Breast epithelium (tissue), 4 donors: ENCODE measurements at regions of chr10 and their contacts with region 1.

Region 1: GRCh38 chr10:122102869-122103525 is 114.0 kb downstream of the TACC2 start:
- DNase-seq: no peak
- H3K4me3 ChIP-seq: no peak overlapping the region
- H3K27ac ChIP-seq: peak overlapping the region; percentile 43 to 67
- H3K4me1 ChIP-seq: no peaks in the 10 kb centered on the region
- H3K27me3 ChIP-seq: no peaks in the 10 kb centered on the region
- CTCF ChIP-seq: no peak
- POLR2A ChIP-seq: no peak

Region 2: GRCh38 chr10:121947343-121948330 is 155.4 kb before region 1 on chr10:
- intact Hi-C with region 1: no loop called
- DNase-seq: no peak
- H3K4me3 ChIP-seq: no peak overlapping the region
- H3K27ac ChIP-seq: no peak overlapping the region
- H3K4me1 ChIP-seq: peaks cover 0 to 5% of the 10 kb centered on the region in 2 donors
- H3K27me3 ChIP-seq: no peaks in the 10 kb centered on the region
- CTCF ChIP-seq: no peak
- POLR2A ChIP-seq: no peak

Region 3: DNA sequence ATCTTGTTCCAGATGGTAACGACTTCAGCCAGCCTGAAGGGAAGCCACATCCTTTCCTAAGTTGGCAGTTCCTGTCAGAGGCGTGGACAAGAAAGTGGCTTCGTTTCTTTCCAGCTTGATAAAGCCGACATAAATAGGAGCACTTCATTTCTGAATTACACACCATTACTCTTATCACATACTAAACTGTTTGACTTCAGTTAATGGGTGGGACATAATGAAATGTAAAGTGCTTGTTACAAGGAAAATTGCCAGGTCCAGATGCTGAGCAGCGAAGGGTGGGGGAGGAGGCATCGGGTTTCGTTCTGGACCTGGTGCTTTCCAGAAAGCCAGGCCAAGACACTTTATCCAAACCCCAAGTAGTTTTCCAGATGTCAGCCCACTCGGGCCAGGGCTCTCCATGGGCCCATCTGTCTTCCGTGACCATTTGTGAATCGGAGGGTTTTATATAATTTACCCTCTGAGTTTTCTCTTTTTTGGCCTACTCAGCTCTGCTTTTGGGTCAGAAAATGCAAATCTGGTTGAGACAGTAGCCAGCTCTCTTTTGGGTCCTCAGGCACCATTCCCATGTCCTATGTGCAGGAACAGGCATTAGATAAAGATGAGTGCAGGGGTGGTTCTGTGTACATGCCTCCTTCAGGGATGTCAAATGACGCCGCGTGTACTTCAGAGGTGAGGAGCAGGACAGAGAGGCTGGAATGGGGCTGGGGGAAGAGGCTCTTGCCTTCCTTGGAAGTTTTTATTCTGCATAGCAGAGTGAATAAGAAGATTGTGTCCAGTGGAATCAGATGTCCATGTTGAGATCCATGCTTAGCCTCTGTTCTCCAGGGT is 23.8 kb before region 1 on chr10:
- intact Hi-C with region 1: loop called (anchors 1 kb)
- DNase-seq: no peak
- H3K4me3 ChIP-seq: no peak overlapping the region
- H3K27ac ChIP-seq: peak overlapping the region in 1 of 2 donors; percentile 7
- H3K4me1 ChIP-seq: no peaks in the 10 kb centered on the region
- H3K27me3 ChIP-seq: no peaks in the 10 kb centered on the region
- CTCF ChIP-seq: no peak
- POLR2A ChIP-seq: no peak